ENCODE measurements at regions of chr9 and their contacts with region 1.

Region 1: DNA sequence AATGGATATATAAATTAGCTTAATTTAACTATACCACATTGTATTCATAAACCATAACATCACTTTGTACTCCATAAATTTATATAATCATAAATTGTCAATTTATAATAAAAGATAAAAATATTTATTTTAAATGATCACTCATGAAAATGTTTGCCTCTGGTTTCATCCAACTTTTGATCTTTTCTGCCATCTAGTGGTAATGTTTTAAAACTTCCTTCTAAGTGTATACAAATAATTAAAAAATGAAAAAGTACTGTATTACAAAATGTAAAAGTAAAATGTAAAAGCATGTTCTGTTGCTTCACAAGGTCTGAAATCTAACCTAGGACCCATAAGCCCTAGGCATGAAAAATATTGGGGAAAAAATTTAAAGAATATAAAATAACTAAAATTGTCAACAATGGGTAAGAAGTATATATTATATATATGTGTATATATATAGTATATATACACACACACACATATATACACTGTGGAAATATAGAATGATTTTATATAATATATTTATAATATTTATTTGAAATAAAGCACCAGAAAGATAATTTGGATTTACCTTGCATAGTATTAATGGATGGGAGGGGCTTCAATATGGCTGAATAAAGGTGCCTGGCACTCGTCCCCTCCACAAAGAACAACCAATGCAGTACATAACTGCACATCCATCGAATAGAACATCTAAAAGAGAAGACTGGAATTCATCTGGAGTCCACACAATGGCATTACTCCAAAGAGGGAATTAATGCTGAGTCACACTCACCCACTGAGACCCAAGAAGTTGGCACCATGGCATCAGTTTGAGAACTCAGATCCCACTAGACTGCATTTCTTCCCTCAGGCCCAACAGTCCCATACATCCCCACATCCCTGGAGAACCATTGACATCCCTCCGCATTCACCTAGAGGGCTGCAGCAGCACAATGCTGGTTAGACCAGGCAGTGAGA is 32.5 kb downstream of the ANXA1 start:
- DNase-seq: peak in 2 of 5 donors; percentile 34 to 69
- H3K4me3 ChIP-seq: no peak overlapping the region
- H3K27ac ChIP-seq: no peak overlapping the region
- H3K4me1 ChIP-seq: peaks cover 0 to 4% (median 0%) of the 10 kb centered on the region in 3 donors
- H3K27me3 ChIP-seq: no peaks in the 10 kb centered on the region
- CTCF ChIP-seq: peak; percentile 38

Region 2: GRCh38 chr9:73104921-73105320 is 79.3 kb before region 1 on chr9:
- intact Hi-C with region 1: loop called (anchors 5 kb)
- DNase-seq: no peak
- H3K4me3 ChIP-seq: no peak overlapping the region
- H3K27ac ChIP-seq: no peak overlapping the region
- H3K4me1 ChIP-seq: peaks cover 0 to 2% (median 0%) of the 10 kb centered on the region in 3 donors
- H3K27me3 ChIP-seq: no peaks in the 10 kb centered on the region
- CTCF ChIP-seq: no peak

Region 3: DNA sequence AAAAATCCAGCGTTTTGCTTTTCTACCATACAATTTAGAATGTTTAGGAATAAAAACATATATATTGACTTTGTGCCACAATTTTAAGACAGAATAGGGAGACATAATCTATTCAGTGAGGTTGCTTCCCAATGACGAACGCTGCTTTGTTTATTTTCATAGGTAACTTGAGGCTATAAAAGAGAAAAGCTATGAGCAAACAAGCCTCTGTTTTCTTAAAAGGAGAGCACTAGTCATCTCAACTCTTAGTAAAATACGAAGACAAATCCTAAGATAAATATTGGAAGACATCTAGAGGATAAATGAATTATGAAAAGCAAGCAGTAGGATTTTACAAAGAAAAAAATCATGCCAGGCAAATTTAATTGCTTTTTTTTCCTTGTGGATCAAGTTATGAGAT is 331.0 kb after region 1 on chr9:
- intact Hi-C with region 1: no loop called
- DNase-seq: no peak
- H3K4me3 ChIP-seq: no peak overlapping the region
- H3K27ac ChIP-seq: no peak overlapping the region
- H3K4me1 ChIP-seq: no peaks in the 10 kb centered on the region
- H3K27me3 ChIP-seq: no peaks in the 10 kb centered on the region
- CTCF ChIP-seq: no peak

Measured in kidney (tissue), 22 donors.